Naive thymus-derived CD8-positive, alpha-beta T cell (primary cell): ENCODE measurements at regions of chr2 and their contacts with region 1.

Region 1: DNA sequence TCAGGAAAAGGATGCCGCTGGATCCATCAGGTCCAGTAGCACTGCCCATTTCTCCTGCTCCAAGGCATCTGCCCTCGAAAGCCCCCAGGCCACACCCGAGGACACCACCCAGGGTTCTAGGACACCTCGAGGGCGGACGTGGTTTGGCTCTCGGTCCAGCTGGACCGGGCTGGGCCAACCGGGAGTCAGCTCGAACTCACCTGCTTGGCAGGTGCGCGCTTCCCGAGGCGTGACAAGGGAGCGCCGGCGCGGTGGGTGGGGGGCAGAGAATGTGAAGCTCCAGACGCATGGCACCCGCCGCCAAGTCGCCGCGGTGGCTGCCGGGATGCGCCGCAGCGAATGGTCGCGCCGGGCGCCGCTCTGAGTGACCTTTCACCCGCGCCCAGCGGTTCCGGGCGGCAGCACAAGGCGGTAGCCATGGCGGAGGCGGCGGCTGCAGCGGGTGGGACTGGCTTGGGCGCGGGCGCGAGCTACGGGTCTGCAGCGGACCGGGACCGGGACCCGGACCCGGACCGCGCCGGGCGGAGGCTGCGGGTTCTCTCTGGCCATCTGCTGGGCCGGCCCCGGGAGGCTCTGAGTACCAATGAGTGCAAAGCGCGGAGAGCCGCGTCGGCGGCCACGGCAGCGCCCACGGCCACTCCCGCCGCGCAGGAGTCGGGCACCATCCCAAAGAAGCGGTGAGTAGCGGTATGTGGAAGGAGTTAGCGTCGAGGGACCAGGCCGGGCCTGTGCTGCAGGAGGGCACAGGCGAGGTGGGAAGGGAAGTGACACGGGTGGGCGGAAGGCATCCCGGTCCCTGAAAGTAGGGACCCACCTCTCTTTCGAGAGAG is at the start of gene AGPS:
- DNase-seq: peak; percentile 63 to 83 (median 69)
- ATAC-seq: peak; percentile 89 to 92
- H3K4me3 Mint-ChIP-seq: peak within 1 kb of the TSS; percentile 87 to 97 (median 92)
- H3K27ac Mint-ChIP-seq: peak within 1 kb of the TSS; percentile 79 to 96 (median 92)
- H3K4me1 Mint-ChIP-seq: peaks cover 33 to 65% (median 52%) of the 10 kb centered on the region in 4 donors
- H3K27me3 Mint-ChIP-seq: no peaks in the 10 kb centered on the region
- polyA plus RNA-seq, gene AGPS: 13.0 to 16.3 (median 13.2) TPM

Region 2: GRCh38 chr2:177164584-177165052 is 228.0 kb before region 1 on chr2:
- POLR2A ChIA-PET with region 1: interaction called, 10 read pairs
- DNase-seq: peak; percentile 65 to 89 (median 76)
- ATAC-seq: peak; percentile 80 to 81
- H3K4me3 Mint-ChIP-seq: no peak overlapping the region
- H3K27ac Mint-ChIP-seq: no peak overlapping the region
- H3K4me1 Mint-ChIP-seq: peaks cover 7 to 18% (median 15%) of the 10 kb centered on the region in 4 donors
- H3K27me3 Mint-ChIP-seq: peaks cover 0 to 4% (median 2%) of the 10 kb centered on the region in 5 donors

Region 3: DNA sequence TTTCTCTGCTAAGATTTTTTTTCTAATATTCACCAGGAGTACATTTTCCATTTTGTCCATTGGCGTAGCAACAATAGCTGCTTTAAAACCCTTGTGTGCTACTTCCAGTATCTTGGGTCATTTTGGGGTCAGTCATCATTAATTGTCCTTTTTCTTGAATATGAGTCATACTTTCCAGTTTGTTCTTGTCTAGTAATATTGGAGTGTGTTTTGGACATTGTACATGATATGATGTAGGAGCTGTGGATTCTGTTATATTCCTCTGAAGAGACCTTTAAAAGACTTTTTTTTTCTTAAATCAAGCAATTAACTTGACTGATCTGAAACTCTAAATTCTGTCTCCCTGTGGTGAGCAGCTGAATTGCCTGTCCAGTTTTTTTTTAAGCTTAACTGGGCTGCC is 40.8 kb after region 1 on chr2:
- POLR2A ChIA-PET with region 1: no interaction called
- DNase-seq: no peak
- ATAC-seq: no peak
- H3K4me3 Mint-ChIP-seq: no peak overlapping the region
- H3K27ac Mint-ChIP-seq: no peak overlapping the region
- H3K4me1 Mint-ChIP-seq: peaks cover 0 to 9% (median 6%) of the 10 kb centered on the region in 4 donors
- H3K27me3 Mint-ChIP-seq: no peaks in the 10 kb centered on the region